Activated CD4-positive, alpha-beta memory T cell treated with anti-CD3 and anti-CD28 coated beads for 36 hours (primary cell): ENCODE measurements at regions of chr2 and their contacts with region 1.

Region 1: DNA sequence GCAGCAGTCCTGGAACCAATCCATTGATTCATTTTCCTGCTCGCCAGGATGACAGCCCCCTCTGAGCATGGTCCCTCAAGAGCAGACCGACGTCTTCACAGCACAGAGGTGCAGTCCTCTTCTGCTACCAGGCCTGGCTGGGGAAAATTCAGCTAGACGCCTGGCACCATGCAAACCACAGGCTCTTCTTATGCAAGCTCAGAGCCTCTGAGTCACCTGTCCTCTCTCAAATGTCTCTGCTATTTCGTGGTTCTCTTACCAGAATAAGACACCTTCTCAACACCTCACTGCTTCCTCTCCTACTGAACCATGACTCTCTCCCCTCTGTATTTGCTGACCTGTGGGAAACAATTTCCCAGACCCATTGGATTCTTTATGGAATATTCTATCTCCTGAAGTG is 79.8 kb upstream of the CYRIA start:
- DNase-seq: peak; percentile 32
- H3K4me3 Mint-ChIP-seq: no peak overlapping the region
- H3K27ac Mint-ChIP-seq: no peak overlapping the region
- H3K4me1 Mint-ChIP-seq: peaks cover 16% of the 10 kb centered on the region
- H3K27me3 Mint-ChIP-seq: peaks cover 8% of the 10 kb centered on the region

Region 2: DNA sequence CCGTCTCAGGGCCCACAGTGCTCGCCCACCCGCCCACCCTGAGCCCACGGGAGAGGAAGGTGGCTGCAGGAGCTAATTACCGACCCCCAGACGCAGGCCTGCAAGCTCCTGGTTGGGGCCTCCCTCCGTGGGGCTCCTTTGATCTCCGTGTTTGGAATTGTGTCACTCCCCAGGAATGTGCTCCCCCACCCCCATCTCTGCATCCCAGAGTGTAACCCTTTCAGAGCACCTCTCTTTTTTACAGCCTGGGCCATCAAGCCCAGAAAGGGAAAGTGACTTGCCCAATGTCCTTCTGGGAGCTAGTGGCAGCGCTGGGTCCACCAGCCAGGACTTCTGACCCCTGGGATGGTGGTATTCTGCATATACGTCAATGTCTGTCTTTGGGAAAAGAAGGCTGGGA is 414.9 kb before region 1 on chr2:
- CTCF ChIA-PET with region 1: no interaction called
- POLR2A ChIA-PET with region 1: no interaction called
- intact Hi-C with region 1: no loop called
- DNase-seq: no peak
- H3K4me3 Mint-ChIP-seq: no peak overlapping the region
- H3K27ac Mint-ChIP-seq: no peak overlapping the region
- H3K4me1 Mint-ChIP-seq: no peaks in the 10 kb centered on the region
- H3K27me3 Mint-ChIP-seq: no peaks in the 10 kb centered on the region

Region 3: DNA sequence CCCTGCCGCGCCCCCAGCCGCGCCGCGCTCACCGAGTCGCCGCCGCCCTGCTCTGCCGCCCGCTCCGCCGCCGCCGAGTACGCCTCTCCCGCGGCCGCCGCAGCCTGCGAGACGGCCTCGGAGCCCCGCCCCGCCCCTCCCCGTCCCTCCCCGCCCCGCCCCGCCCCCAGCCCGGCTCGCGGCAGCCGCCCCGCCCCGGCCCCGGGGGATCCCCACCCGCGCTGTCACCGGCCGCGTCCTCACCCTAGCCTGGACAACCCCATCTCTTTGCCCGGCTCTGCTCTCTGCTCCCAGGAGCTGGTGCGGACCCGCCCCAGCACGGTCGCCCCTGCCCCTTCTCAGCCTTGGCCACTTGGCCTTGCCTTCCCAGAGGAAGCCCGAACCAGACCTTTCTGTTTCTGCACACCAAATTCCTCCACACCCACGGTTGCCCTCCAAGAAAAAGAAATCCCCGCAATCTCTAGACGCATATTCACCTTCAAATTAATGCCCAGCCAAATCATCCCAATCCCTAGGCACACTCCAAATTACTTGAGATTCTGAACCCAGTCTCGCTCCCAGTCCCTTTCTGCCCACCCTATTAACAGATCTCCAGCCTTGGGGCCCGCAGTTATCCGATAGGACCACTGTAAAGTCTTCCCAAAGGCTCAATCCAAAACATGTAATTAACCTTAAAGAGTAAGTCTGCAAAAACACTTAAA is 79.6 kb before region 1 on chr2 and contains the start of gene CYRIA:
- CTCF ChIA-PET with region 1: no interaction called
- POLR2A ChIA-PET with region 1: no interaction called
- intact Hi-C with region 1: loop called (anchors 5 kb)
- DNase-seq: peak; percentile 68
- H3K4me3 Mint-ChIP-seq: peak within 1 kb of the TSS; percentile 68
- H3K27ac Mint-ChIP-seq: peak within 1 kb of the TSS; percentile 60
- H3K4me1 Mint-ChIP-seq: peaks cover 16% of the 10 kb centered on the region
- H3K27me3 Mint-ChIP-seq: peaks cover 45% of the 10 kb centered on the region
- total RNA-seq, gene CYRIA: 0.81 to 0.99 TPM

Region 4: DNA sequence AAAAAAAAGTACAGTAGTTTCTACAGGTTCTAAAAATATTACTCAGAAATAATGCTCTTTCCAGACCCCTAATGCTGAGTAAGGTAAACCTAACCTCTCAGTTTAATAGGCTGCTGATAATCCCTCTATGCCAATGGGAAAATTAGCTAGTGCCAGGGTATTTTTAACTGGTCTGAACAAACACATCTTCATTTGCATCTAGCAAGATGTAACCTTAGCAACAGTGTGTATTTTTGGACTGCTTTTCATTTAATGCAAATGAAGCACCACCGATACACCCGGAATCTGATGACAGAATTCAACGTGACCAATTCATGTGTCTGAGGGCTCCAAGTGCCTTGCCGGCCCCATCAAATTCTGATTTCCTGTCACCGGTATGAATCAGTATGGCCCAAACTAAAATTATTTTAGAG is 32.4 kb before region 1 on chr2:
- CTCF ChIA-PET with region 1: no interaction called
- POLR2A ChIA-PET with region 1: no interaction called
- intact Hi-C with region 1: no loop called
- DNase-seq: no peak
- H3K4me3 Mint-ChIP-seq: no peak overlapping the region
- H3K27ac Mint-ChIP-seq: no peak overlapping the region
- H3K4me1 Mint-ChIP-seq: no peaks in the 10 kb centered on the region
- H3K27me3 Mint-ChIP-seq: peaks cover 6% of the 10 kb centered on the region

Region 5: GRCh38 chr2:16727256-16727655 is 18.2 kb before region 1 on chr2:
- CTCF ChIA-PET with region 1: no interaction called
- POLR2A ChIA-PET with region 1: no interaction called
- intact Hi-C with region 1: loop called (anchors 1 kb)
- DNase-seq: no peak
- H3K4me3 Mint-ChIP-seq: no peak overlapping the region
- H3K27ac Mint-ChIP-seq: no peak overlapping the region
- H3K4me1 Mint-ChIP-seq: peaks cover 7% of the 10 kb centered on the region
- H3K27me3 Mint-ChIP-seq: peaks cover 8% of the 10 kb centered on the region